ENCODE measurements at regions of chr17 and their contacts with region 1.

Region 1: DNA sequence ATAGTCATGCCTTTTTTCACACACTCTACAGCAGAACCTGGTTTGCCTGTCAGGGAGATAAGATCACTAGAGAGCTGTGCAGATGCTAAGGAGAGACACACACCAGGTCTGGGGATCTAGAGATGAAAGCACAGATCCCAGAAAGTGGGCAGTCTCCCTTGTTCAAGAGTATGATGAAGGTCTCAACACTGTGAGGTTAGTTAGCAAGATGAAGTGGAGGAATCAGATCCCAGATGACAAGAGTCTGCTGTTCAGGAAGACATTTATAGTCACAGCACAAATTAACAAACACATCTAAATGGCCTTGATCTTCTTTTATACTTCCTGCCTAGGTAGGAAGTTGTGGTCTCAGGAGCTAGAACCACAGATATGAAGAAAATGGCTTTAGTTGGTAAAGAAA is 23.4 kb upstream of the SKAP1 start:
- DNase-seq: no peak
- ATAC-seq: peak; percentile 66
- H3K4me3 Mint-ChIP-seq: peak overlapping the region; percentile 79
- H3K27ac Mint-ChIP-seq: peak overlapping the region; percentile 93
- H3K4me1 Mint-ChIP-seq: peaks cover 60% of the 10 kb centered on the region
- H3K27me3 Mint-ChIP-seq: no peaks in the 10 kb centered on the region

Region 2: DNA sequence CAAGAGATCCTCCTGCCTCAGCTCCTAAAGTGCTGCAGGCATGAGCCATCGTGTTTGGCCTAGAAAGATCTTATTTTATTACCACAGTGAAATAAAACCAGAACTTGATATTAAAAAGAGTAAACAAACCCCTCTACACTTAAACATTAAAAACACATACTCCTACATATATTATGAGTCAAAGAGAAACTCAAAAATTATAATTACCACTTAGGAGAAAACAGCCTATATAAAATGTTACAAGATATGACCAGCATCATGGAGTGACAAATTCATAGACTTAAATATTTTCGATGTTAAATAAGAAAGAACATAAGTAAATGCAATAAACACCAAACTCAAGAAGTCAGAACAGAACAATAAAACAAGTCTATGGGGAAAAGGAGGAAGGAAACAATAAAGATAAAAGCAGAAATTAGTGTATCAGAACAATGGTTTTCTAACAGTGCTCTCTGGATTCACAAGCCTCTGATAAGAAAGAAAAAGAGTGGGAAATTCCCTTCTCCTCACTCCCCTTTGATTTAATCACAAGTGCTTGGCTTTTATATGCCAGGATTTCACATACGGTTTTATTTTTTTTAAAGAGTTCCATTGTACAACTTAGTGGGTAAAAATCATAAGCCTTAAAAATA is 46.4 kb before region 1 on chr17:
- POLR2A ChIA-PET with region 1: no interaction called
- DNase-seq: no peak
- ATAC-seq: no peak
- H3K4me3 Mint-ChIP-seq: no peak overlapping the region
- H3K27ac Mint-ChIP-seq: peak overlapping the region; percentile 67
- H3K4me1 Mint-ChIP-seq: peaks cover 28% of the 10 kb centered on the region
- H3K27me3 Mint-ChIP-seq: no peaks in the 10 kb centered on the region

Region 3: GRCh38 chr17:48429638-48430586 is 23.5 kb before region 1 on chr17 and contains the start of gene SKAP1:
- POLR2A ChIA-PET with region 1: interaction called, 10 read pairs
- DNase-seq: peak; percentile 83
- ATAC-seq: peak; percentile 56
- H3K4me3 Mint-ChIP-seq: peak within 1 kb of the TSS; percentile 97
- H3K27ac Mint-ChIP-seq: peak within 1 kb of the TSS; percentile 97
- H3K4me1 Mint-ChIP-seq: peaks cover 59% of the 10 kb centered on the region
- H3K27me3 Mint-ChIP-seq: no peaks in the 10 kb centered on the region
- total RNA-seq, gene SKAP1: 96.0 to 98.8 TPM

Region 4: GRCh38 chr17:48441231-48441711 is 12.2 kb before region 1 on chr17:
- POLR2A ChIA-PET with region 1: interaction called, 61 read pairs
- DNase-seq: no peak
- ATAC-seq: peak; percentile 73
- H3K4me3 Mint-ChIP-seq: peak overlapping the region; percentile 68
- H3K27ac Mint-ChIP-seq: peak overlapping the region; percentile 87
- H3K4me1 Mint-ChIP-seq: peaks cover 84% of the 10 kb centered on the region
- H3K27me3 Mint-ChIP-seq: no peaks in the 10 kb centered on the region

Region 5: GRCh38 chr17:48472411-48473281 is 19.2 kb after region 1 on chr17:
- POLR2A ChIA-PET with region 1: no interaction called
- DNase-seq: no peak
- ATAC-seq: no peak
- H3K4me3 Mint-ChIP-seq: no peak overlapping the region
- H3K27ac Mint-ChIP-seq: no peak overlapping the region
- H3K4me1 Mint-ChIP-seq: peaks cover 2% of the 10 kb centered on the region
- H3K27me3 Mint-ChIP-seq: peaks cover 10% of the 10 kb centered on the region

Measured in activated naive CD8-positive, alpha-beta T cell treated with anti-CD3 and anti-CD28 coated beads, Interleukin-2, amount 10 ng/mL, durations not matched to agents 7 days and 5 days (primary cell).